GM10248 (cell line): ENCODE measurements at regions of chr6 and their contacts with region 1.

Region 1: GRCh38 chr6:77620278-77620882 is 32.5 kb upstream of the MEI4 start:
- DNase-seq: no peak
- CTCF ChIP-seq: peak; percentile 30

Region 2: GRCh38 chr6:77457720-77458349 is 162.5 kb before region 1 on chr6:
- CTCF ChIA-PET with region 1: no interaction called
- POLR2A ChIA-PET with region 1: no interaction called
- DNase-seq: peak; percentile 44
- CTCF ChIP-seq: peak; percentile 74

Region 3: GRCh38 chr6:77609106-77609505 is 11.3 kb before region 1 on chr6:
- CTCF ChIA-PET with region 1: interaction called, 11 read pairs
- POLR2A ChIA-PET with region 1: no interaction called
- DNase-seq: no peak
- CTCF ChIP-seq: no peak